AG04449 (cell line): ENCODE measurements at regions of chr9 and their contacts with region 1.

Region 1: DNA sequence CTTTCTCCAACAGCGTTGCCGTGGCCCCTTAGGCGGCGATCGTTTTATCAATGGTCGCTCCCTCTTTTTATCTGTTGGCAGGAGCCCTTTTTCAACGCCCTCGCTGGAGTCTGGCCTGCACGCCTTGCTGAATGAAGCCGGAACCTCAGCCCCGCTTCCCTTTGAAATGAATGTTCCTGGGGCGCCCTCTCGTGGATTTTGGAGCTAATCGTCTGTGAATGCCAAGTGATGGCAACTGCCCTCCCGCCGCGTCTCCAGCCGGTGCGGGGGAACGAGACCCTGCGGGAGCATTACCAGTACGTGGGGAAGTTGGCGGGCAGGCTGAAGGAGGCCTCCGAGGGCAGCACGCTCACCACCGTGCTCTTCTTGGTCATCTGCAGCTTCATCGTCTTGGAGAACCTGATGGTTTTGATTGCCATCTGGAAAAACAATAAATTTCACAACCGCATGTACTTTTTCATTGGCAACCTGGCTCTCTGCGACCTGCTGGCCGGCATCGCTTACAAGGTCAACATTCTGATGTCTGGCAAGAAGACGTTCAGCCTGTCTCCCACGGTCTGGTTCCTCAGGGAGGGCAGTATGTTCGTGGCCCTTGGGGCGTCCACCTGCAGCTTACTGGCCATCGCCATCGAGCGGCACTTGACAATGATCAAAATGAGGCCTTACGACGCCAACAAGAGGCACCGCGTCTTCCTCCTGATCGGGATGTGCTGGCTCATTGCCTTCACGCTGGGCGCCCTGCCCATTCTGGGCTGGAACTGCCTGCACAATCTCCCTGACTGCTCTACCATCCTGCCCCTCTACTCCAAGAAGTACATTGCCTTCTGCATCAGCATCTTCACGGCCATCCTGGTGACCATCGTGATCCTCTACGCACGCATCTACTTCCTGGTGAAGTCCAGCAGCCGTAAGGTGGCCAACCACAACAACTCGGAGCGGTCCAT is 10.0 kb downstream of the S1PR3 start:
- DNase-seq: no peak
- H3K4me3 ChIP-seq: peak overlapping the region; percentile 34; the same call in 1 of the 2 replicates
- CTCF ChIP-seq: peak; percentile 79

Region 2: DNA sequence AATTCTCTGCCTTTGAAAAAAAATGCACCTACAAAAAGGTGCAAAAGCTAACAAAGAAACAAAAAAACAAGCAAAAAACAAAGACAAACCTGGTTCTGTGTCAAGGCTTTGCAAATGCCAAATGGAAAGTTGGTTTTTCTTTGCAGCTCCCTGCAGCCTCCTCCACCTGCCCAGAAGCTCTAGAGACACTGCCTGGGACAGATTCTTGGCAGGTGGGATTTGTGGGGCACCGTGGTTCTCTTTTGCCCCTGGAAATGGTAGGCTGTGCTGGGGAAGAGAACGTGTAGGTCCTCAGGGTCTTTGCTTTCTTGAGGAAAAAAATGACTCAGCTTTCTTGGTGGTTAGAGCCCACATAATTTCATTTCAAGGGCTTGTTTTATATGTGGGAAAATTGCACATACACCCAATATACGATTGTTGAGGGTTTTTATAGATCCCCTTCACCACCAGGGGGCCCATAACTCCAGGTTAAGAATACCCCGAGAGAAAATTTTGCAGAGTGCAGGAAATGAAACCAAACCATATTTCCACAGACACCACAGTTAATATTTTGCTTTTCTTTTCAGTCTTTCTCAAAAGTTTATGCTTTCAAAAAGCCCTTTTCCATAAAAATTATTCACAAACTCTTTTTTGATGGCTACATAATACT is 407.6 kb before region 1 on chr9:
- CTCF ChIA-PET with region 1: interaction called, 103 read pairs
- POLR2A ChIA-PET with region 1: no interaction called
- DNase-seq: no peak
- H3K4me3 ChIP-seq: no peak overlapping the region
- CTCF ChIP-seq: peak; percentile 26

Region 3: DNA sequence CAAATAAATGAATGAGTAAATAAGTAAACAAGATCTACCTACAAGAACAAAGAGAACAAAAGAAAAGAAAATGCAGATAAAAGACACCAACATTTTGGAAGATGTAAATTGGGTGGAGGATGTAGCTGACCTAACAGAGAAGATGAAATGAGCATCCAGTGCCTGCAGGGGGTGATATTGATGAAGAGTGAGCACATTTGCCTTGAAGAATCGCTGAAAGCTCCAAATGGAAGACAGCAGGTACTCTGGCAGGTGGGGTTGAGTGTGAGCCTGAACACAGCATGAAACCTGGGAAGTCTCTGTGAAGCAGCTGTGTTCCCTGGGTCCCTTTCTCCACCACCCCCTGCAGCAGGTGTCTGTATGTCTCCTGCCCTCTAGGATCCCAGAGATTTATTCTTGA is 340.6 kb before region 1 on chr9:
- CTCF ChIA-PET with region 1: interaction called, 11 read pairs
- POLR2A ChIA-PET with region 1: no interaction called
- DNase-seq: no peak
- H3K4me3 ChIP-seq: no peak overlapping the region
- CTCF ChIP-seq: peak; percentile 46

Region 4: DNA sequence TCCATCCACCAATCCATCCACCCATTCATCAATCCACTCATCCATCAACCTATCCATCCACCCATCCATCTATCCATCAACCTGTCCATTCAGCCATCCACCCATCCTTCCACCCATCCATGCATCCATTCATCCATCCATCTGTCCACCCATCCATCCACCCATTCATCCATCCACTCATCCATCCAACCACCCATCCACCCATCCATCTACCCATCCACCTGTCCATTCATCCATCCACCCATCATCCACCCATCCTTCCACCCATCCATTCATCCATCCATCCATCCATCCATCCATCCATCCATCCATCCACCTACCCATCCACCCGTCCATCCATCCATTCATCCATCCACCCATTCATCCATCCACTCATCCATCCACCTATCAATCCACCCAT is 270.5 kb before region 1 on chr9:
- CTCF ChIA-PET with region 1: no interaction called
- POLR2A ChIA-PET with region 1: no interaction called
- DNase-seq: no peak
- H3K4me3 ChIP-seq: no peak overlapping the region
- CTCF ChIP-seq: no peak

Region 5: GRCh38 chr9:88837731-88838130 is 163.5 kb before region 1 on chr9:
- CTCF ChIA-PET with region 1: no interaction called
- POLR2A ChIA-PET with region 1: no interaction called
- DNase-seq: no peak
- H3K4me3 ChIP-seq: no peak overlapping the region
- CTCF ChIP-seq: no peak

Region 6: GRCh38 chr9:89106224-89106851 is 105.1 kb after region 1 on chr9:
- CTCF ChIA-PET with region 1: no interaction called
- POLR2A ChIA-PET with region 1: no interaction called
- DNase-seq: no peak
- H3K4me3 ChIP-seq: no peak overlapping the region
- CTCF ChIP-seq: no peak